Panc1 (cell line): ENCODE measurements at regions of chr1 and their contacts with region 1.

Region 1: DNA sequence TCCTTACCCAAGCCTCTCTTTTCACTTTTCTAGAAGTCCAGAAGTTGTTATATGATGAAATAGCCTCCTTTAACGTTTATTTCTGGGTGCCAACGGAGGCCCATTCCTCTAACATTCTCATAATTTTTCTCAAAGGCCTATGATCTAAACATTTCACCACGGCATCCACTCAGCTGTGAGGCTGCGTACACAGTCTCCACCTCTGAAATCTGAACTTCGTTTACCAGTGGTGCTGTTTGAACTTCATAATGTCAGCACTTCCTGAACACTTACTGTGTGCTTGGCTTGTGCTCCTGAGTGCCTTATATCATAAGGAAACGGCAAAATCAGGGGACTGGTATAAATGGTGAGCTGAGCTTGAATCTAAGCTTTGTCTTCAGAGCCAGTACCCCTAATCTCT is 12.0 kb upstream of the RBP7 start:
- DNase-seq: no peak
- ATAC-seq: no peak
- H3K4me3 ChIP-seq: no peak overlapping the region
- H3K27ac ChIP-seq: no peak overlapping the region
- H3K4me1 ChIP-seq: no peaks in the 10 kb centered on the region
- H3K27me3 ChIP-seq: no peaks in the 10 kb centered on the region
- CTCF ChIP-seq: no peak

Region 2: DNA sequence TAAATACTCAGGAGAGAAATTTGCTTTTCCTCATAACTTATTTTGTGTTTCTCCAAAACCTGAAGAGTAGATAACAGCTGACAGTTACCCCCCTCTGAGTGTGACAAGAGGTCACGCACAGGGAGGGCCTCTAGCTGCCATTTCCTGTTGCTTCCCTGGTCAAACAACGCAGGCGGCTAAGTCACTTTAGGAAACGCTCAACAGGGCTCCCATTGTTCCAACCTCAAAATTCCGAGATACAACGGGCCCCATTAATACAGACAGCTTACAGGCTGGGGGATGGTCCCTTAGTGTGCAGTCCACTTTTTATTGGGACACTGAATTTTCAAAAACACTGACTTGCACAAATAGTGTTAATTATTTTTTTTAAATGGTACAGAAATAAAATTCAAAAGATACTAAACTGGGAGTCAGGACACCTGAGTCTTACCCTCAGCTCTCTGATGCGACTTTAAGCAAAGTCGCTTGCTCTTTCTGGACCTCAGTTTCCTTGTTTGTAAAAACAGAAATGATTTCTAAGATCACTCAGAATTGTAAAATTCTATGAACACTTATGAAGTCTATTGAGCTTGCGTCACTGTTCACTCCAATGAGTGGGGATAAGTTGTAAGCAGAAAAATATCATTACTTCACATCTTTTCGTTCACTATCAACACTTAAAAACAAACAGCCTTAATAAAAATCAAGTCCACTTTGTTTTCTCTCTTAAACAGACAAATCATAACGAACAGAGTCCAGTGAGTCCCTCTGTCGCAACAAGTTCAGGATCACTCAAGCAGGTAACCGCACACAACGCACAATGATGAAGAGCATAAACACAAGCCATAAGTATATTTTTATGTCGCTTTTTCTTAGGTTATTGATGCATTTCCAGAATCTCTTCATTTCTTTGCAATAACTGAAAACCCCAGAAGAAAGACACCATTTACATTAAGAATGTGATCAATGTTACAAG is 55.3 kb before region 1 on chr1:
- CTCF ChIA-PET with region 1: interaction called, 11 read pairs
- POLR2A ChIA-PET with region 1: no interaction called
- in situ Hi-C with region 1: no loop called
- intact Hi-C with region 1: no loop called
- DNase-seq: no peak
- ATAC-seq: 0 out of 2 replicates have a peak, but pooled peaks have one; percentile 69
- H3K4me3 ChIP-seq: no peak overlapping the region
- H3K27ac ChIP-seq: no peak overlapping the region
- H3K4me1 ChIP-seq: no peaks in the 10 kb centered on the region
- H3K27me3 ChIP-seq: no peaks in the 10 kb centered on the region
- CTCF ChIP-seq: no peak

Region 3: DNA sequence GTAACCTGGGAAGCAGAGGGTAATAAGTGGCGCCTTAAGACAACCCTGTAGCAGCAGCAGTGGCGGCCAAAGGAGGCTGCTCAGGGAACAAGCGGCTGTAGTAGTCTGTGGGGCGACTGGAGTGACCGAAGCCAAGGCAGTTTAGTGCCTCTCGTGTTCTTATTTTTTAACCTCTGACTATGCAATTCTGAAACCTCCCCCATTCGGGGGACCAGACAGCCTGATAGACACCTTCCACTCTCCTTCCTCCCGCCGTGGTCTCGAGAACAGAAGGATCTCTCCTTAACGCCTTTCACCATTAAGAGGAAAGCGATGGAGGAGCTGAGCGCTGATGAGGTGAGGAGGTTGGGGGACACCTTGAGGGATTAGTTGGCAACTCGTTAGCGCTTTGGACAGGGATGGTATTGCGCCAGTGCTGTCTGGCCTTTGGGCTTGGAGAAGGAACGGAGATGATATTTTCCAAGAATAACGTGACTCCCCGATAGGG is 48.4 kb after region 1 on chr1:
- CTCF ChIA-PET with region 1: no interaction called
- POLR2A ChIA-PET with region 1: no interaction called
- in situ Hi-C with region 1: no loop called
- intact Hi-C with region 1: no loop called
- DNase-seq: no peak
- ATAC-seq: peak; percentile 64
- H3K4me3 ChIP-seq: peak overlapping the region; percentile 84 to 99
- H3K27ac ChIP-seq: peak overlapping the region; percentile 99
- H3K4me1 ChIP-seq: peaks cover 11% of the 10 kb centered on the region; the same call in 1 of the 2 replicates
- H3K27me3 ChIP-seq: no peaks in the 10 kb centered on the region
- CTCF ChIP-seq: no peak; the same call in 1 of the 2 replicates